MCF 10A (cell line): ENCODE measurements at regions of chr11 and their contacts with region 1.

Region 1: GRCh38 chr11:23540101-23540561 is 679.9 kb upstream of the CCDC179 start:
- DNase-seq: peak; percentile 56
- H3K4me3 Mint-ChIP-seq: no peak overlapping the region
- H3K27ac Mint-ChIP-seq: no peak overlapping the region
- H3K4me1 Mint-ChIP-seq: peaks cover 6% of the 10 kb centered on the region
- H3K27me3 Mint-ChIP-seq: peaks cover 61% of the 10 kb centered on the region
- CTCF ChIP-seq: peak; percentile 76

Region 2: GRCh38 chr11:23555085-23555484 is 15.0 kb after region 1 on chr11:
- CTCF ChIA-PET with region 1: interaction called, 12 read pairs
- POLR2A ChIA-PET with region 1: interaction called, 3 read pairs
- intact Hi-C with region 1: no loop called
- DNase-seq: no peak
- H3K4me3 Mint-ChIP-seq: no peak overlapping the region
- H3K27ac Mint-ChIP-seq: no peak overlapping the region
- H3K4me1 Mint-ChIP-seq: no peaks in the 10 kb centered on the region
- H3K27me3 Mint-ChIP-seq: peaks cover 29% of the 10 kb centered on the region
- CTCF ChIP-seq: no peak

Region 3: DNA sequence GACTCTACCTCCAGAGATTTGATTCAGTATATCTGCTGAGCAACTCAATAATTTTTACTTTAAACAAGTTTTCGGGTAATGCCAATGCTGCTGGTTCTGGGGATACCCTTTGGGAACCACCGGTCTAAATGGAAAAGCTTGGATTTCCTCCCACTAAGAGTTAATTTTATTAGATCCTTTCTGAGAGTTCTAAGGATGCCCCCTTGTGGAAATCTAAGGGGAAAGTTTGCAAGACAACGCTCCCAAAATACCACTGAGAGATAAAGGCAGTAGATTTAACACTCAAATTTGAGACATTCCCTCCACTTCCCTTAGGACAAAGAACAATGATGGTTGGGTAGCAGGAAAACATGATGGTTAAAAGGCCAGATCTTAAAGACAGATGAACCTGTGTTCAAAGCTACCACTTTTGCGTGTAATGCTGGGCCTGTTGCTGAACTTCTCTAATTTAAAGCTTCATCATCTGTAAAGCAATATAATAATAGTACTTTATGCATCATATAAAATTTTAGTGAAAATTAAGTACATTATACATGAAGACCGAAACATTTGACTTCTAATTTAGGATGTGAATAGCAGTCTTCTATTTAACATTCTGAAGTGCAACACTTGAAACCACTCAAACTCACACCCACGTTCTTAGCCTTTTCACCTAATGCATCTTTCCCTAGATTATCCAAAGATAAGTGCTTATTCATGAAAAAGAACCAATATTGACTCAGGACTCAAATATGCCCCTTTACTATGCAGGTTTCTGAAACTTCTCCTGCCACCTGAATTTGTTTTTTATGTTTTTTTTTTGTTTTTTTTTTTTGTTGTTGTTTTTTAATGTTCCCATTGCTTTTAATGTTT is 846.6 kb after region 1 on chr11:
- CTCF ChIA-PET with region 1: interaction called, 6 read pairs
- POLR2A ChIA-PET with region 1: no interaction called
- intact Hi-C with region 1: loop called (anchors 1 kb)
- DNase-seq: peak; percentile 32
- H3K4me3 Mint-ChIP-seq: no peak overlapping the region
- H3K27ac Mint-ChIP-seq: no peak overlapping the region
- H3K4me1 Mint-ChIP-seq: no peaks in the 10 kb centered on the region
- H3K27me3 Mint-ChIP-seq: peaks cover 9% of the 10 kb centered on the region
- CTCF ChIP-seq: peak; percentile 40